Panc1 (cell line): ENCODE measurements at regions of chr7 and their contacts with region 1.

Region 1: GRCh38 chr7:99385564-99385963 is 11.0 kb downstream of the ARPC1B start:
- DNase-seq: no peak
- ATAC-seq: no peak
- H3K4me3 ChIP-seq: no peak overlapping the region
- H3K27ac ChIP-seq: no peak overlapping the region
- H3K4me1 ChIP-seq: peaks cover 12% of the 10 kb centered on the region
- H3K27me3 ChIP-seq: no peaks in the 10 kb centered on the region
- CTCF ChIP-seq: no peak

Region 2: GRCh38 chr7:99353871-99354270 is 31.7 kb before region 1 on chr7:
- CTCF ChIA-PET with region 1: interaction called, 3 read pairs
- POLR2A ChIA-PET with region 1: interaction called, 16 read pairs
- in situ Hi-C with region 1: no loop called
- intact Hi-C with region 1: no loop called
- DNase-seq: no peak
- ATAC-seq: no peak
- H3K4me3 ChIP-seq: no peak overlapping the region
- H3K27ac ChIP-seq: no peak overlapping the region
- H3K4me1 ChIP-seq: no peaks in the 10 kb centered on the region
- H3K27me3 ChIP-seq: no peaks in the 10 kb centered on the region
- CTCF ChIP-seq: no peak

Region 3: GRCh38 chr7:100101016-100101862 is 715.7 kb after region 1 on chr7 and contains the starts of genes AP4M1 and MCM7:
- CTCF ChIA-PET with region 1: no interaction called
- POLR2A ChIA-PET with region 1: no interaction called
- in situ Hi-C with region 1: no loop called
- intact Hi-C with region 1: no loop called
- DNase-seq: peak; percentile 90
- ATAC-seq: peak; percentile 90
- H3K4me3 ChIP-seq: peak within 1 kb of the TSS; percentile 82 to 89
- H3K27ac ChIP-seq: peak within 1 kb of the TSS; percentile 93
- H3K4me1 ChIP-seq: peaks cover 20% of the 10 kb centered on the region
- H3K27me3 ChIP-seq: no peaks in the 10 kb centered on the region
- CTCF ChIP-seq: no peak
- total RNA-seq, gene AP4M1: 42.6 TPM
- total RNA-seq, gene MCM7: 258 TPM